Tibial artery (tissue), 4 donors: ENCODE measurements at regions of chr2 and their contacts with region 1.

Region 1: DNA sequence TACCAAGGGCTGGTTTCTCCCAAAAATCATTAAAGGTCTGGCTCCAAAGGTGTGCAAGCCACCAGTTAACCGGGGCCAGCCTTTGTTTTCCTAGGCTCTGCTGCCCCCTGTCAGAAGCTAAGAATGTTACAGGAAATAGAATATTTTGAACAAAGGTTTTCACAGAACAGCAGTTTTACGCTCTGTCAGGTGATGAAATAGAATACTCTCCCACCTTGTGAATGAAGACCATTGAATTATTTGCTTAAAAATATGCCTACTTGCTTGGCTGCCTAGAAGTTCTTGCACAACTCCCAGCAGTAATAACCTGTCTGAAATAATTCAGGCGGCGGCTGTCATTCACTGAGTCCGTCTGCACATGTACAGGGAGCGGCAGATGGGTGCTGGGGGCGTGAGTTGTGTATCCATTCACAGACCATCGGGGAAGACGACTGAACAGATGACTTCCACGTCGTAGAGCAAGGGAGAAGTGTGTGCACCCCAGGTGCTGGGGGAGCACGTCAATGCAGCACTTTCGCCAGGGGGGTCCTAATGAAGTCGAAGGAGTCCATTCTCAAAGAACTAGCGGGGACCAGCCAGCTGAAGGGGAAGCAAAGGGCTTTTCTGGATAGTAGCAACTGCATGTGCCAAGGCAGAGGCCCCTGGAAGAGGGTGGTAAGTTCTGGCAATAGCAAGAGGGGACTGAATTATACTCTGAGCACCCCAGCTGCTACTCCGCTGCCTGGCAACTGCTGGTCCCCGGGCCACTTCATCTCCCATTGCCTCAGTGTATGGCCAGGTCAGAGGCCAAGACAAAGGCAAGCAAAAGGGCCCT is 56.1 kb downstream of the SF3B1 start:
- DNase-seq: no peak
- H3K4me3 ChIP-seq: peak overlapping the region; percentile 13 to 41
- H3K27ac ChIP-seq: peak overlapping the region in 1 of 2 donors; percentile 20
- H3K4me1 ChIP-seq: peaks cover 0 to 18% (median 4%) of the 10 kb centered on the region in 4 donors
- H3K27me3 ChIP-seq: no peaks in the 10 kb centered on the region
- CTCF ChIP-seq: peak; percentile 67 to 83

Region 2: DNA sequence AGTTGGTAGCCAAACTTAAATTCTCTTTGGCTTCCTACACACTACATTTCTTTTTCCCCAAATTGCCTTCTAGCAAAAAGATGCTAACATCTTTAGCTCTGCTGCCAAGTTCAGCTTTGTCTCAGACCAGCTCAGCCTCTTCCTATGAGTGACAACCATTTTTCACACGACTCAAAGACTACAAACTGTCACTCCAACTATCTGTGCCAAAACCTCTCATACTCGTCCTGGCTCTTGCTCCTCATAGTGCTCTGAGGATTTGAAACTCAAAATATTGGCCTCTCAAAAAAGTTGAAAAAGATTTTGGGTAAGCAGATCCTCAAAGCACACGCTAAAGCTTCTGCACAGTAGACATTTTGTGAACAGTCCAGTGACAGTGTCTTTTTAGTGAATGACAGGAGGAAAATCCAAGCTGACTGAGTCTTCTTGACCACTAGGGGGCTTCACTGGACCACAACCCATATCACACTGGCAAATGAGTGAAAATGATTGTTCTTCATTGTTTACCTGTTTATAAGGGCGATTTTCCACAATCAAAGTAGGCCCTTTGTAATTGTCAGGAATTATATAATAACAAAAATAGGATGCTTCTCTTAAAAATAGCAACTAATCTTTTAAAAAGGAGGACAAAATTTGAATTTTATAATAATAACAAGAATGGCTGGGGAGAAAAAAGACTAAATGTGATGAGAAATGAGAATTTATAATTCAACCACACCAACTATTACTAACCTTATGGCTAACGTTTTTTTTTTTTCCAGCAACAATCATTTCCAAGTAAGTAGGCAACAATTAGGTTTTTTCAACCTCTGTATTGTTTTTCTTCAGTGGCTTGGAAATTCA is 366.7 kb before region 1 on chr2:
- intact Hi-C with region 1: loop called (anchors 5 kb)
- DNase-seq: no peak
- H3K4me3 ChIP-seq: no peak overlapping the region
- H3K27ac ChIP-seq: no peak overlapping the region
- H3K4me1 ChIP-seq: no peaks in the 10 kb centered on the region
- H3K27me3 ChIP-seq: no peaks in the 10 kb centered on the region
- CTCF ChIP-seq: peak; percentile 67 to 71

Region 3: DNA sequence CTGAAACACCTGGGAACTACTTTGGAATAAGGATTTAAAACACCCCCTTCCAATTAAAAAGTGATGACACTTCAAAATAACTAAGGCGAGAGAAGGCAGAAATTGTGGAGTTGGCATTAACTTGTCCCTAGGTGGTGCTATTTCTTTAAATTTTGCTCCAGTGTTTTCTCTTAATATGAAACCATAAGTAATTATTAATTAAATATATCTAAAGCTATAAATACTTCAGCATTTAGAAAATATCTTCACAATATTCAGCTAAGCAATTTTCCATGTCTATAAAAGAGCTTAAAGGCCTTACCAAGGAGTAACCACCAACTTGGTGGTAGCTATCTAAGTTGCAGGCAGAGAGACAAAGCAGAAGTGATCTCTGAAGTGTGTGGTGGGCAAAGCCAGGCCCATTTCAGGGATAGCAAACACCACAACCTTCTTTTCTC is 265.4 kb before region 1 on chr2:
- intact Hi-C with region 1: loop called (anchors 10 kb)
- DNase-seq: no peak
- H3K4me3 ChIP-seq: no peak overlapping the region
- H3K27ac ChIP-seq: no peak overlapping the region
- H3K4me1 ChIP-seq: peaks cover 0 to 12% (median 9%) of the 10 kb centered on the region in 4 donors
- H3K27me3 ChIP-seq: no peaks in the 10 kb centered on the region
- CTCF ChIP-seq: peak; percentile 44 to 47

Region 4: DNA sequence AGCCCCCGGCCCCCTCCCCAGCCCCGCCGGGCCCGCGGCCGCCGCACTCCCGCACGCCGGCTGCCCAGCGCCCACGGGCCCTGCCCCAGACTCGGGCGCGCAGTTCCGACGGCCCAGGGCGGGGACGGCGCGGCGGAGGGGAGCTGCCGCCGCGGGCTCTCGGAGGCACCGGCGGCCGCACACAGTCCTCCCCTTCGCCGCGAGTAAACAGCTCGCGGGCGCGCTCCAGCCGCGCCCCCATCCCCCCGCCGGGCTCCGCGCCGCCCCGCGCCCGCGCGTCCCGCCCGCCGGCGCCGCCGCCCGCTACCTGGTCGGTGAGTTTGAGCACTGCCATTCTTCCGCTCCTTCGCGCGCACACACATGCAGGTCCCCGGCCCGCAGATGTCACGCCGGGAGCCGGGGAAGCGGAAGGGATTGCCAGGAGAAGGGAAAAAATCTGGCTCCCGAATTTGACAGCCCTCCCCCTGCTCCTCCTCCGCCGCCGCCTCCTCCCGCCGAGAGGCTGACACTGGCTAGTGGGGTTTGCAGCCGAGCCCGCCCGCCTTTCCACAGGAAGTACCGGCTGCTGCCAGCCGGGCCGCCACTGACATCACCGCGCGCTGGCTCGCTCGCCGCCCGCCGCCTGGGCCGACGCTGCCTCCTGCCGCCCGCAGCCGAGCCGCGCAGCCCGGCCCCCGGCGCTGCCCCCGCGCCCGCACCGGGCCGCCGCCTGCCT is 68.3 kb before region 1 on chr2 and contains the start of gene ANKRD44:
- intact Hi-C with region 1: loop called (anchors 5 kb)
- DNase-seq: peak; percentile 94 to 96
- H3K4me3 ChIP-seq: peak within 1 kb of the TSS; percentile 80 to 83
- H3K27ac ChIP-seq: peak within 1 kb of the TSS; percentile 79 to 86
- H3K4me1 ChIP-seq: peaks cover 0 to 49% (median 25%) of the 10 kb centered on the region in 4 donors
- H3K27me3 ChIP-seq: no peaks in the 10 kb centered on the region
- CTCF ChIP-seq: peak; percentile 47 to 94